Activated naive CD4-positive, alpha-beta T cell treated with anti-CD3 and anti-CD28 coated beads for 36 hours (primary cell): ENCODE measurements at regions of chr18 and their contacts with region 1.

Region 1: GRCh38 chr18:59268721-59269562 is 4.3 kb downstream of the RAX start:
- DNase-seq: peak; percentile 68
- H3K4me3 Mint-ChIP-seq: peak overlapping the region; percentile 39
- H3K27ac Mint-ChIP-seq: no peak overlapping the region
- H3K4me1 Mint-ChIP-seq: peaks cover 29% of the 10 kb centered on the region
- H3K27me3 Mint-ChIP-seq: peaks cover 81% of the 10 kb centered on the region

Region 2: DNA sequence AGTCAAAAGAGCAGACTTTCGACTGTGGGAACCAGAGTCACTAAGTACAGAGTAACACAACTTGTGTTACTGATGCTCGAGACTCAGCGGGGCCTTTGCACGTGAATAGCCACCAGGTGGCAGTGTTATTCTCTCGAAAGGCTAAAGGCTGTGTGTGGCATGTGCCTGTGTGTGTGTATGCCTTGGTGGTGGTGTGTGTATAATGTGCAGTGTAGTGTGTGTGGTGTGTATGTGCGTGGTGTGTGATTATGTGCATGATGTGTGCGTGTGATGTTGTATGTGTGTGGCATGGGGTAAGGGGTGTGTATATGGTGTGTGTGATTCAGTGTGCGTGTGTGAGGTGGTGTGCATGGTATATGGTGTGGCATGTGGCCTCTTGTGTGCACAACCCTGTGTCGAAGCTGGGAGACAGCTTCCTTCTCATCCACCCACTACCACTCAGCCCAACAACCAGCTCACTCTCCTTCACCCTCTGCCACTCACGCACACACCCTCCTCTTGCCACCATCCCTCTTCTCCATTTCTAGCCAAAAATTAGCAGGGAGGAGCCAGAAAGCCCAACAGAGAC is 487.2 kb before region 1 on chr18:
- CTCF ChIA-PET with region 1: no interaction called
- intact Hi-C with region 1: loop called (anchors 1 kb)
- DNase-seq: peak; percentile 85
- H3K4me3 Mint-ChIP-seq: no peak overlapping the region
- H3K27ac Mint-ChIP-seq: no peak overlapping the region
- H3K4me1 Mint-ChIP-seq: no peaks in the 10 kb centered on the region
- H3K27me3 Mint-ChIP-seq: peaks cover 21% of the 10 kb centered on the region

Region 3: GRCh38 chr18:59085797-59086196 is 183.1 kb before region 1 on chr18:
- CTCF ChIA-PET with region 1: interaction called, 5 read pairs
- intact Hi-C with region 1: loop called (anchors 1 kb)
- DNase-seq: no peak
- H3K4me3 Mint-ChIP-seq: no peak overlapping the region
- H3K27ac Mint-ChIP-seq: no peak overlapping the region
- H3K4me1 Mint-ChIP-seq: peaks cover 12% of the 10 kb centered on the region
- H3K27me3 Mint-ChIP-seq: peaks cover 23% of the 10 kb centered on the region

Region 4: DNA sequence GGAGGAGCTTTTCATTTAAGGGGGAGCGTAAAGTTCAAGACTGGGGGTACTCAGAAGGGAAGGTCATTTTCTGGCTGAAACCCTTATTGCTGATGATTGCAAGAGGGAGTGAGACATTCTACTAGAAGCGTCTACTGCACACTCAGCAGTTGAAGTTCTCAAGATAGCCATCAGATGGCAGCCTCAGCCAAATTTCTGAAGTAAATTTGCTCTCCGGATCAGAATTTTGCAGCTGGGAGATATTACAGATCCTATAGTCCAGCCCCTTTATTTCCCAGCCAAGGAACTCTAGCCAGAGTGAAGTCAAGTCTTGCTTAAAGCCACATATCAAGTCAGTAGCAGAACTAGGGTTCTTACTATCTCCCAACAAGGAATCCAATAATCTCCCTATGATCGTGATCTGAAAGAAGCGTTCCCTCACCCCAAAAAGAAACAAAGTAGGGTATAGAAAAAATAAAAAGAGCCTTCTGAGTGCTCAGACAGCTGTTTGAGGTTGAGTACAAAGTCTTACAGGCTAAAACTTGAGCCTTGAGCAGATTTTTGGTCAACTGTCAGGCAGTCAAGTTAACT is 19.7 kb before region 1 on chr18:
- CTCF ChIA-PET with region 1: interaction called, 10 read pairs
- intact Hi-C with region 1: loop called (anchors 2 kb)
- DNase-seq: peak; percentile 66
- H3K4me3 Mint-ChIP-seq: no peak overlapping the region
- H3K27ac Mint-ChIP-seq: no peak overlapping the region
- H3K4me1 Mint-ChIP-seq: no peaks in the 10 kb centered on the region
- H3K27me3 Mint-ChIP-seq: peaks cover 54% of the 10 kb centered on the region

Region 5: GRCh38 chr18:59358712-59359575 is 90.0 kb after region 1 on chr18 and contains the start of gene LMAN1:
- CTCF ChIA-PET with region 1: no interaction called
- intact Hi-C with region 1: loop called (anchors 1 kb)
- DNase-seq: peak; percentile 96
- H3K4me3 Mint-ChIP-seq: peak within 1 kb of the TSS; percentile 98
- H3K27ac Mint-ChIP-seq: peak within 1 kb of the TSS; percentile 98
- H3K4me1 Mint-ChIP-seq: peaks cover 36% of the 10 kb centered on the region
- H3K27me3 Mint-ChIP-seq: no peaks in the 10 kb centered on the region
- total RNA-seq, gene LMAN1: 146 to 151 TPM

Region 6: GRCh38 chr18:59697236-59697932 is 428.4 kb after region 1 on chr18 and contains the start of gene CCBE1:
- CTCF ChIA-PET with region 1: no interaction called
- intact Hi-C with region 1: loop called (anchors 10 kb)
- DNase-seq: peak; percentile 52
- H3K4me3 Mint-ChIP-seq: peak within 1 kb of the TSS; percentile 4
- H3K27ac Mint-ChIP-seq: no peak within 1 kb of the TSS
- H3K4me1 Mint-ChIP-seq: peaks cover 13% of the 10 kb centered on the region
- H3K27me3 Mint-ChIP-seq: peaks cover 52% of the 10 kb centered on the region
- total RNA-seq, gene CCBE1: not detected

Region 7: GRCh38 chr18:59885579-59886163 is 616.7 kb after region 1 on chr18:
- CTCF ChIA-PET with region 1: no interaction called
- intact Hi-C with region 1: loop called (anchors 5 kb)
- DNase-seq: peak; percentile 59
- H3K4me3 Mint-ChIP-seq: peak overlapping the region; percentile 26
- H3K27ac Mint-ChIP-seq: peak overlapping the region; percentile 68
- H3K4me1 Mint-ChIP-seq: peaks cover 37% of the 10 kb centered on the region
- H3K27me3 Mint-ChIP-seq: no peaks in the 10 kb centered on the region